ENCODE measurements at regions of chr21 and their contacts with region 1.

Region 1: DNA sequence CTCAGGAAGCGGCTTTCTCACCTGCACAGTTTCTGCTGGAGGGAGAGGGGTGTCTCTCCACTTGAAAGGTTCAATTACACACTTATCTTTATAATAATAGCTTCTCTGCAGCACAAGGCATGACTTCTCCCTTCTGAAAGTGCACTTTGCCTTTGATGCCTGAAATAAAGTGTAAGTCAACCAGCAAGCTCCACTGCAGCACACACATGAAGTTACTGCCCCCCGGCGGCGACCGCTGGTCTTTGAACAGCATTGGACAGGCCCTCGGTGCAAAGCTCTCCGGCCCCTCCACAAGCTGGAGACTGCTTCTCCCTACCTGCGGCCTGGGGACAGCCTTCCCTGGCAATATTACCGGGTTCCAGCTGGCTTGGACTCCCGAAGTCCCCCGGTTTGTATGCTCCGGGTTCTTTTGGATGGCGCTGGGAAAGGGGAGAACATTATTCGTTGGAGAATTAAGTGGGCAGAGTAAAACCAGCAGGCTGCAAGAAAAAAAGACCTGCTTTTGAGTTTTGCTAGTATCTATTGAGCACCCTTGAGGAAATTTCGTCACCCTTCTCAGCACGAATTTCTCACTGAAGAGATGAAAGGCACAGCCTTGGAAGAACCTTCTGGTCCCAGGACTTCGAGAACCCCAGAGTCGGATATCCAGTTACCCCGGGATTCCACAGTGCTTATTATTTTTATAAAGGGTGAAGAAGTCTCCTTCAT is 11.8 kb downstream of the RCAN1 start:
- DNase-seq: peak; percentile 77 to 83
- H3K4me3 ChIP-seq: no peak overlapping the region
- H3K4me3 Mint-ChIP-seq: no peak overlapping the region
- H3K27ac Mint-ChIP-seq: no peak overlapping the region
- H3K4me1 ChIP-seq: no peaks in the 10 kb centered on the region
- H3K4me1 Mint-ChIP-seq: peaks cover 4% of the 10 kb centered on the region
- H3K27me3 ChIP-seq: no peaks in the 10 kb centered on the region; the same call in 1 of the 2 replicates
- H3K27me3 Mint-ChIP-seq: no peaks in the 10 kb centered on the region
- CTCF ChIP-seq: peak; percentile 76 to 84

Region 2: GRCh38 chr21:34510148-34511142 is 92.7 kb before region 1 on chr21:
- CTCF ChIA-PET with region 1: interaction called, 24 read pairs
- POLR2A ChIA-PET with region 1: no interaction called
- intact Hi-C with region 1: loop called (anchors 1 kb)
- DNase-seq: peak; percentile 72 to 77
- H3K4me3 ChIP-seq: no peak overlapping the region
- H3K4me3 Mint-ChIP-seq: no peak overlapping the region
- H3K27ac Mint-ChIP-seq: peak overlapping the region; percentile 59
- H3K4me1 ChIP-seq: no peaks in the 10 kb centered on the region
- H3K4me1 Mint-ChIP-seq: peaks cover 6% of the 10 kb centered on the region
- H3K27me3 ChIP-seq: no peaks in the 10 kb centered on the region
- H3K27me3 Mint-ChIP-seq: no peaks in the 10 kb centered on the region
- CTCF ChIP-seq: peak; percentile 52 to 79

Region 3: DNA sequence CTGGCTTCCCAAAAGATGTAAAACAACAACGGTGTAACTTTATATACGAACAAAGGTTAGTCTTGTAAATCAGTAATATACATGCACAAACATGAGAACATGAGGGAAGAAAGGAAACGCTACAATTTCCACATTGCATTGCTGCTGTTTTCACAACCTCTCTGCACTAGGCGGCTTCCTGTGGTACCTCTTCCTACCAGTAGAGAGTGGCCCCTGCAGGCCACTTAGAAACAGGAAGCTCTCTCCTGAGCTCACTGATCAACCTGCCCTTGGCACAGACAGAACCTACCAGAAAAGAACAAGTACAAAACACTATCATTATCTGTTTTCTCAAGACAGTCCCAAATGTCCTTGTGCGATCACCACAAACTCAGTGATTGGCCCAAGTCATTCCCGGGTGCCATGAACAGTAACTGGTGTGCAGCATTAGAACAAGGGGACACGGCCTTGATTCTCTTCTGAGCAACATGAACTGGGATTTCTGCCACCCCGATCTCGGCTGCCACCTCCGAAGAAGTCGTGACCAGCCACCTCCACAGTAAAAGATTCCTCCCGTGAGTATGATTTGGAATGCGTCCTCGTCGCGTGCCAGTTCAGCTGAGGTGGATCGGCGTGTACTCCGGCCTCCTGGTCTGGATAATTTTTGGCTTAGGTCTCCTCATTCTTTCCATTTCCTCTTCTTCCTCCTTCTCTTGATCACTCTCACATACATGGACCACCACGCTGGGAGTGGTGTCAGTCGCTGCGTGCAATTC is 85.5 kb before region 1 on chr21:
- CTCF ChIA-PET with region 1: interaction called, 17 read pairs
- POLR2A ChIA-PET with region 1: no interaction called
- intact Hi-C with region 1: no loop called
- DNase-seq: peak in 1 of 2 experiments; percentile 35
- H3K4me3 ChIP-seq: no peak overlapping the region
- H3K4me3 Mint-ChIP-seq: no peak overlapping the region
- H3K27ac Mint-ChIP-seq: peak overlapping the region; percentile 42
- H3K4me1 ChIP-seq: peaks cover 8% of the 10 kb centered on the region
- H3K4me1 Mint-ChIP-seq: peaks cover under 1% of the 10 kb centered on the region
- H3K27me3 ChIP-seq: no peaks in the 10 kb centered on the region
- H3K27me3 Mint-ChIP-seq: no peaks in the 10 kb centered on the region
- CTCF ChIP-seq: peak; percentile 42 to 53

Region 4: DNA sequence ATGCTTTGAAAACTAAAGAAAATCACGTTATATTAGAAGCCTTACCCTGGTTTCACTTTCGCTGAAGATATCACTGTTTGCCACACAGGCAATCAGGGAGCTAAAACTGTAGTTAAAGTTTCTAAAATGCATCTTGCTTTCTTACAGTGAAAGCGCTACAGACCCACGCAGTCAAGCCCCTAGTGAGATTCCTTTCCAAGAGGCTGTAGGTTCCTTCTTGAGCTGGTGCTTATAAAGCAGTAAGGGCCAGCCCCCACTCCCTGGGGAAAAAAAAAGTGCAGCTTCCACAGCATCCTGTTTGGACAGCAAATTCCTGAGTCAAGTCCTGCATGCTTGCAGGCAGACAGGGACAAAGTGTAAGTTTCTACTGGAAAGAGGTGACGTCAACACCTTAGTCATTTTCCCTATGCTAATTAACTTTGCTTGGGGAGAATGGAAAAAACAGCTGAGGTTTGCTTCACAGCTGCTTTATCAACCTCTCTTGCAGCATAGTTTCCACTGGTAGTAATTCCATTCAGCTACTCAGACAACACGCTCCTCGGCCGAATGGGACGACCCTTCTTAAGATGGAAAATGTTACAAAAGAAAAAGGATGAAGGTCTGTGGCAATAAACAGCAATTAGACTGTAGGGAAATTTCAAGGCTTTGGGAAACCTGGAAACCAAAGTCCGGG is 76.4 kb before region 1 on chr21:
- CTCF ChIA-PET with region 1: interaction called, 13 read pairs
- POLR2A ChIA-PET with region 1: interaction called, 6 read pairs
- intact Hi-C with region 1: loop called (anchors 5 kb)
- DNase-seq: peak; percentile 91 to 96
- H3K4me3 ChIP-seq: peak overlapping the region; percentile 29
- H3K4me3 Mint-ChIP-seq: peak overlapping the region; percentile 78
- H3K27ac Mint-ChIP-seq: peak overlapping the region; percentile 91
- H3K4me1 ChIP-seq: peaks cover 33% of the 10 kb centered on the region
- H3K4me1 Mint-ChIP-seq: peaks cover 18% of the 10 kb centered on the region
- H3K27me3 ChIP-seq: no peaks in the 10 kb centered on the region
- H3K27me3 Mint-ChIP-seq: no peaks in the 10 kb centered on the region
- CTCF ChIP-seq: no peak

Region 5: GRCh38 chr21:34926803-34927467 is 323.8 kb after region 1 on chr21:
- CTCF ChIA-PET with region 1: no interaction called
- POLR2A ChIA-PET with region 1: no interaction called
- intact Hi-C with region 1: no loop called
- DNase-seq: peak; percentile 67 to 75
- H3K4me3 ChIP-seq: no peak overlapping the region
- H3K4me3 Mint-ChIP-seq: peak overlapping the region; percentile 44
- H3K27ac Mint-ChIP-seq: peak overlapping the region; percentile 84
- H3K4me1 ChIP-seq: peaks cover 14% of the 10 kb centered on the region
- H3K4me1 Mint-ChIP-seq: peaks cover 13% of the 10 kb centered on the region
- H3K27me3 ChIP-seq: no peaks in the 10 kb centered on the region
- H3K27me3 Mint-ChIP-seq: no peaks in the 10 kb centered on the region
- CTCF ChIP-seq: no peak